IMR-90 (cell line): ENCODE measurements at regions of chr2 and their contacts with region 1.

Region 1: GRCh38 chr2:235883675-235884074 is 284.5 kb downstream of the GBX2 start:
- DNase-seq: no peak
- ATAC-seq: no peak
- H3K4me3 ChIP-seq: no peak overlapping the region
- H3K27ac ChIP-seq: no peak overlapping the region
- H3K4me1 ChIP-seq: peaks cover 4% of the 10 kb centered on the region; the same call in 1 of the 2 replicates
- H3K27me3 ChIP-seq: no peaks in the 10 kb centered on the region
- CTCF ChIP-seq: no peak
- POLR2A ChIP-seq: no peak
- RAD21 ChIP-seq: no peak

Region 2: DNA sequence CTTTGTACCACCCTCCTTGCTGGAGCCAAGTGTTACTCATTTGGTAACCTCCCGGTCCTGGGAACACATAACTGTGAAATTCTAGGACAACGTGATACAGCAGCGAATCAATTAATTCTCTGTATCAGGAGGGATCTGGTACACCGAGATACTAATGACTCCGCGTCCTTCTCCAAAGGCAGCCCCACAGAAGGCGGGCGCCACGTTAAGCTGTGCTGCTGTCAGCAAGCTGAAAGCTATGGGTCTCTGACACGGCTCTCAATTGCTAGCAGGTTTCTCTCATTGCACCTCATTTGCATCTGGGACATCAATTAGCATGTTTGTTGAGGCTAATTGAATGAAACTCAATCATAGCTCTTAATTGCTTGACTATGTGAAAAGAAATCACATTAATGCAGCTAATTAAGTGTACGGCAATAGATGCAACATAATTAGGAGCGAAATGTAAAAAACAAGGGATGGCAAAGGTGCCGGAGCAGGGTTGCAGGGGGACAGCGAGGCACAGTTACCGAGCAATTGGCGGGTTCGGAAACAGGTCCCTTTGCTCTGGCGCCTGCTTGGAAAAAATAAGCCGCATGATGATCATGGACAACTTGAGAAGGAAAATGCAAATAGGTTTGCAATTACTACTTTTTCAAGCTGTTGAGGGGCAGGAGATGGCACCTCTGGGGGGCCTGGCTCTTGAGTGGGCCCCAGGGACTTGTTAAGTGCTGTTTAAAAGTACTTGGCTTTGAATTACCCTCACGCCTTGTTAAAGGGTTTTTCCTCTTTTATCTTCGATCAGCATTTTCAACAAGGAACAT is 20.3 kb after region 1 on chr2:
- CTCF ChIA-PET with region 1: no interaction called
- POLR2A ChIA-PET with region 1: no interaction called
- dilution Hi-C with region 1: no loop called
- in situ Hi-C with region 1: no loop called
- intact Hi-C with region 1: loop called (anchors 1 kb)
- DNase-seq: no peak
- ATAC-seq: no peak
- H3K4me3 ChIP-seq: no peak overlapping the region
- H3K27ac ChIP-seq: no peak overlapping the region
- H3K4me1 ChIP-seq: no peaks in the 10 kb centered on the region
- H3K27me3 ChIP-seq: no peaks in the 10 kb centered on the region
- CTCF ChIP-seq: no peak
- POLR2A ChIP-seq: no peak
- RAD21 ChIP-seq: no peak

Region 3: GRCh38 chr2:236642584-236643291 is 759.1 kb after region 1 on chr2:
- CTCF ChIA-PET with region 1: no interaction called
- POLR2A ChIA-PET with region 1: no interaction called
- dilution Hi-C with region 1: no loop called
- in situ Hi-C with region 1: no loop called
- intact Hi-C with region 1: no loop called
- DNase-seq: peak; percentile 96
- ATAC-seq: peak; percentile 93
- H3K4me3 ChIP-seq: no peak overlapping the region
- H3K27ac ChIP-seq: peak overlapping the region; percentile 96
- H3K4me1 ChIP-seq: peaks cover 9% of the 10 kb centered on the region
- H3K27me3 ChIP-seq: no peaks in the 10 kb centered on the region
- CTCF ChIP-seq: no peak
- POLR2A ChIP-seq: no peak
- RAD21 ChIP-seq: peak; percentile 12; the same call in 1 of the 2 replicates